RWPE1 (cell line): ENCODE measurements at regions of chr14 and their contacts with region 1.

Region 1: DNA sequence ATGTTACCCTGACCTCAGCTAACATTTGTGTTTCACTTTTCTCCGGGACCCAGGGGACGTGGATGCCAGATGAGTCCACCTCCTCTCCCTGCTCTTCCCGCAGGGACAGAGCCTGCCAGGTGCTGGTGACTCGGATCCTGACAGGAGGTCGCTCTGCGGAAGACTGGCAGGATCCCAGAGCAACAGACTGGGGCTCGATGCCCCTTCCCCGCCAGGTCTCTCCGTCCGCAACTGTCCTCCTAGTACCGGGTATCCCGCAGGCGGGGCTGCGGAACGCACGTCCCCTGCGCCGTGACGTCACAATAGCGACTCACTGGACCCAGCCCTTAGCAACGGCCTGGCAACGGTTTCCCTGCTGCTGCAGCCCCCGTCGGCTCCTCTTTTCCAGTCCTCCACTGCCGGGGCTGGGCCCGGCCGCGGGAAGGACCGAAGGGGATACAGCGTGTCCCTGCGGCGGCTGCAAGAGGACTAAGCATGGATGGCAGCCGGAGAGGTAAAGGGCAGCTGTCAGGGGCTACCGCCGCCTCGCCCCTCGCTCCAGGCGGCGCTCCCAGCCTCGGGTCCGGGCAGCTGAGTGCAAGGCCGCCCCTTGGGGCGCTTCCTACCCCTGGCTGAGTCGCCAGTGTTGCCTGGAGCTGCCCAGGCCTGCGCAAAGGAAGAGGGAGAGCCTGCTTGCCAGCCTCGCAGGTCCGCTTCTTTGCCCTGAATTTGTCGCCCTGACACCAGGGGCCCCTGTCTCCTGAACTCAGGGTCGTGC is at the start of gene SPATA7:
- DNase-seq: peak; percentile 83
- H3K27ac ChIP-seq: peak within 1 kb of the TSS; percentile 59
- CTCF ChIP-seq: no peak

Region 2: GRCh38 chr14:88189417-88190191 is 195.9 kb before region 1 on chr14:
- CTCF ChIA-PET with region 1: interaction called, 10 read pairs
- POLR2A ChIA-PET with region 1: no interaction called
- DNase-seq: peak; percentile 63
- H3K27ac ChIP-seq: no peak overlapping the region
- CTCF ChIP-seq: peak; percentile 56

Region 3: GRCh38 chr14:88369496-88369895 is 16.0 kb before region 1 on chr14:
- CTCF ChIA-PET with region 1: no interaction called
- POLR2A ChIA-PET with region 1: no interaction called
- DNase-seq: no peak
- H3K27ac ChIP-seq: no peak overlapping the region
- CTCF ChIP-seq: no peak